ENCODE measurements at regions of chr19 and their contacts with region 1.

Region 1: DNA sequence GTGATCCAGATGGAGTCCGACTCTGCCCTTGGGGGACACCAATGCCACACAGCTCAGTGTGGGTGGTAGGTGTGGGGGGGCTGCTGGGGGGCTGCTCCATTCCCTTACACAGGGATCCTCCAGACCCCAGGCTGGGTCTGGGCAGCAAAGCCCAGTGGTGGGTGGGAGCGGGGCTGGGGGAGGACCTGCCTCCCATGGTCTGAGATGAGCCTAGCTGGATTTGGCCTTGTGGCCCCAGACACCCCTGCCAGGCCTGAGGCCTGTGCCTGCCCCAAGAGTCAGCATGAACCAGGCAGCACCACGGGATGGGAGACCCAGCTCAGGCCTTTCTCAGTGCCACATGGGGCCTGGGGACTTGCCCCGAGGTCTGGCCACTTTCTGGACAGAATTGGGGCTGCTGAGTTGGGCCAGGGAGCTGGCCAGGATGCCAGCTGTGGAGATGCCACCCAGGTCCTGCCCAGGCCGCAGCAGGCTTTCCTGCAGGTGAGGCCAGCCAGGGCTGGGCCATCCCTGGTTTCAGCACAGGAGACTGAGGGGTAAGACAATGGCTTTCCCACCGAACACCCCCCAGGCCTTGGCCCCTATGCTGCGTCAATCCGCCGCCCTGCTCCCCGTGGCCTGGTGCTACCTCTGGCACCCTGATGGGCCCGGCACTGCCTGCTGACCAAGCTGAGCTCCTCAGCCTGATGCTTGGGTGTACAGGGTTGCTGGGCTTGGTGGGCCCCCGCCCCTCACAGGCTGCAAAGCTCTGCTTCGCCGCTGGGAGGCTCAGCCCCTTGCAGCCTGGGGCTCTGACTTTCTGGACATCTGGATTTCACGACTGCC is 24.2 kb downstream of the CEBPG start:
- H3K4me3 ChIP-seq: no peak overlapping the region
- H3K27ac ChIP-seq: no peak overlapping the region
- H3K4me1 ChIP-seq: no peaks in the 10 kb centered on the region
- CTCF ChIP-seq: peak; percentile 86

Region 2: DNA sequence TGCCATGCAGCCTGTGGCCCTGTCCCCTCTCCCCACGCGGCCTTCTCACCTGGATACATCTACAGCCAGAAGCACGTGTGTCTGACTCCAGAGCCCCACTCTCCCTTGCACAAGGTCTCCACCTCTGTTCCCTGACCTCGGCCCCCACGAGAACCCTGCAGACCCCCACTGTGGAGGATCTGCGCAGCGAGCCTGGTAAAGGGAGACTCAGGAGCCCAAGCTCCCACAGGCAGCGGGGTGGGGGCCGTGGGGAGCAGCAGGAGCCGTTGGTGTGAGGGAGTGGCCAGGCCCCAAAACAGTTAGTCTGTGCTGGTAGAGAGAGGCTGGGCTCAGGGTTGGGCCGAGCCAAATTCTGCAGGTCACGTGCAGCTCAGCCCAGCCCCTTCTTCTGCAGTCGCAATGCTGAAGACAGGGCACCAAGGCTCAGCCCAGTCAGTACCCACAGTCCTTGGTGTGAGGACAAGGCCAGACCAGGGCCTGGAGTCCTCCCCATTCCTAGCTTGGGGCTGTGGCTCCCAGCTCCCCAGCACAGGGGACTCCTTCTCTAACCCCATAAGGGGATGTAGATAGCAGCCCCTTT is 143.4 kb before region 1 on chr19:
- CTCF ChIA-PET with region 1: interaction called, 14 read pairs
- POLR2A ChIA-PET with region 1: no interaction called
- H3K4me3 ChIP-seq: no peak overlapping the region
- H3K27ac ChIP-seq: no peak overlapping the region
- H3K4me1 ChIP-seq: no peaks in the 10 kb centered on the region
- CTCF ChIP-seq: no peak

Region 3: DNA sequence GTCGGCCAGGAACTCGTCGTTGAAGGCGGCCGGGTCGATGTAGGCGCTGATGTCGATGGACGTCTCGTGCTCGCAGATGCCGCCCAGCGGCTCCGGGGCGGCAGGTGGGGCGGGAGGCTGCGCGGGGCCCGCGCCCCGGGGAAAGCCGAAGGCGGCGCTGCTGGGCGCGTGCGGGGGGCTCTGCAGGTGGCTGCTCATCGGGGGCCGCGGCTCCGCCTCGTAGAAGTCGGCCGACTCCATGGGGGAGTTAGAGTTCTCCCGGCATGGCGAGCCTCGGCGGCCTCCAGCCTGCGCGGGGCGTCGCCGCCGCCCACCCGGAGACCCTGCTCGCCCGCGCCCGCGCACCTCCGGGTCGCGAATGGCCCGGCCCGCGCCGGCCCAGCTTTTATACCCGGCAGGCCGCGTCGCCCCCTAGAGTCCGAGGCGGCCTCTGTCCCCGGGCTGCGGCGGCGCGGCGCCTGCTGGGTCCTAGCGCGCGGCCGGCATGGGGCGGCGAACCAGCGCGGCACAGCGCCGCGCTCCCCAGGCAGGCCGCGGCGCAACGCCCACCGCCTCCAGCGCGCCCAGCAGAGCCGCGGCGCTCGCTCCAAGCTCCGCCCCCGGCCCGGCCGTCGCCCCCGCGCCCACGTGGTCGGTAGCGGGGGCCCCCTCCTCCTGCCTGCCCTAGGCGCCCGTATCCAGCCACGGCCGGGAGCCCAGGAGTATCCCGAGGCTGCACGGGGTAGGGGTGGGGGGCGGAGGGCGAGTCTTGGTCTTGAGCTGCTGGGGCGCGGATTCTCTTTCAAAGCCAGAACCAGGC is 95.4 kb before region 1 on chr19 and contains the start of gene CEBPA:
- CTCF ChIA-PET with region 1: interaction called, 10 read pairs
- POLR2A ChIA-PET with region 1: interaction called, 7 read pairs
- H3K4me3 ChIP-seq: peak within 1 kb of the TSS; percentile 48
- H3K27ac ChIP-seq: peak within 1 kb of the TSS; percentile 98
- H3K4me1 ChIP-seq: peaks cover 68% of the 10 kb centered on the region
- CTCF ChIP-seq: peak; percentile 63; the same call in 1 of the 2 replicates

Region 4: DNA sequence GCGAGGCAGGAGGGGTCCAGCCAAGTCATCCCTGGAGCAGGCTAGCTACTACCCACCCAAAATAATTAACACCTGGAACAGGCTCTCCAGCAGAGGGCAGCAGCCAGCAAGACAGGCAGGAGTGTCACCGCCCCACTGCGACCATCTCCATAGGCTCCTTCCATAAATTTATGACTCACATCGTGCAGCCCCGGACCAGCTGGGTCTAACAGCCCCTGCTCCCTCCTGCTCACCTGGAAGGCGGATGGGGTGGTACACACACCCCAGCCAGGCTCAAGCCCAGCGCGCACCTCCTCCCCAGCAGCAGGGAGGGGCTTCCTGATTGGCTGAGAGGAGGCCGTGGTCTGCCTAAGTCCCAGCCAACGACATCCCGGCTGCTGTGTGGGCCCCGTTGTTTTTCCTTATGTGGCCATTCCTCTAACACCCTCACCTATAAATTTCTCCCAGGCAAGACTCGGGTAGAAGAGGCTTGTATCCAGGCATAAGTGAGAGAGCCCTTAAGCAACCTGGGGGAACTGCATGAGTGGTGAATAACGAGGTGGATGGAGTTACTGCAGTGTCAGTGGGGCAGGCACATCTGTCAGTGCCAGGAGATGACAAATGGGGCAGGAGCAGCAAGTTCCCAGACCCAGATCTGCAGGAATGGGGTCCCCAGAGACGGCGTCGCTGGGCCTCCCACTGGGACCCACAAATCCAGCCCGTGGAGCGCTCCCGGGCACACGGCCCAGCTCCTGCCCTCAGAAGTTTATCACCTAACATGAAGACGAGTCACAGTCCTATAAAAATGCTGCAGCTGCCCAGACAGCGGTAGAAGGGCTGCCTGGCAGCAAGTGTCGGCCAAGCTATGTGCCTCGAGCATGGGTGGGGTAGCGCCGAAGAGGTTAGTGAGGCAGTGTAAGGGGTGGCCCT is 18.8 kb after region 1 on chr19:
- CTCF ChIA-PET with region 1: interaction called, 77 read pairs
- POLR2A ChIA-PET with region 1: interaction called, 3 read pairs
- H3K4me3 ChIP-seq: no peak overlapping the region
- H3K27ac ChIP-seq: peak overlapping the region; percentile 49; the same call in 1 of the 2 replicates
- H3K4me1 ChIP-seq: peaks cover 7% of the 10 kb centered on the region
- CTCF ChIP-seq: peak; percentile 98

Region 5: DNA sequence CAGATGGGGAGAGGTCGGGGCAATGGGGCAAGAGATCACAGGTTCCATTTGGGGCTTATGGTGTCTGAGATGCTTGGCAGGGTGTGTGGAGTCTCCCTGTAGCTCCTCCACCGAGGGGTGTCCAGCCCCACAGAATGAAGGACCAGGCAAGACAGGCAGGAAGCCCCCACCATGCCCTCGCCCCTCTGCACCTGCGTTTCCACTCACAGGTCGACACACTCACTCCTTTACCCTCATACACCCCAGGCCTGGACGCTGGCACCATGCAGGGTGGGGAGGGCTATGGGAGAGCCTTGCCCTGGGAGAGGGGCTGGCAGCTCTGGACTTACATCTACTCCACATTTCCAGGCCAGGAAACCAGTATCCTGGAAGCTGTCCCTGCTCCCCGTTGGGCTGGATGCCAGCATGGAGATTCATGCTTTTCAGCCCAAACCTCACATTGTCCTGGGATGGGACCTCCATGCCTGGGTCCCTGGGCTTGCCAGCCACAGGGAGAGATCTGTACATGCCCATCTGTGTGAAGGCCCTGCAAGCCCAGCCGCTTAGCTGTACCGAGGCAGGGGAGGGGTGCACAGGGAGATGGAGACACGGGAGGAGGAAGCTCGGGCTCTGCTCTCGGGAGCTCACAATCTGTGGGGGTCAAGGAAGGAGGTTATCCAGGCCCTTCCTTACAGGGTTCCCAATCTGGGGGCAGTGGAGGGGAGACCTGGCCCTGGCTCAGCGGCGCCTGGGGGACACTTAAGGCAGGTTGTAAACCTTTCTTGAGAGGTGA is 301.1 kb after region 1 on chr19:
- CTCF ChIA-PET with region 1: no interaction called
- POLR2A ChIA-PET with region 1: no interaction called
- H3K4me3 ChIP-seq: no peak overlapping the region
- H3K27ac ChIP-seq: no peak overlapping the region
- H3K4me1 ChIP-seq: no peaks in the 10 kb centered on the region
- CTCF ChIP-seq: no peak

Measured in HEK293 (cell line).